Activated CD8-positive, alpha-beta T cell treated with anti-CD3 and anti-CD28 coated beads, Interleukin-2, amount 10 ng/mL, durations not matched to agents 7 days and 5 days (primary cell): ENCODE measurements at regions of chr17 and their contacts with region 1.

Region 1: GRCh38 chr17:35486920-35487732 is 38.6 kb upstream of the SLFN13 start:
- DNase-seq: peak; percentile 76
- ATAC-seq: peak; percentile 69
- H3K4me3 Mint-ChIP-seq: peak overlapping the region; percentile 76
- H3K27ac Mint-ChIP-seq: peak overlapping the region; percentile 90
- H3K4me1 Mint-ChIP-seq: peaks cover 71% of the 10 kb centered on the region
- H3K27me3 Mint-ChIP-seq: no peaks in the 10 kb centered on the region

Region 2: GRCh38 chr17:35352284-35352683 is 134.8 kb before region 1 on chr17:
- CTCF ChIA-PET with region 1: no interaction called
- POLR2A ChIA-PET with region 1: no interaction called
- DNase-seq: no peak
- ATAC-seq: no peak
- H3K4me3 Mint-ChIP-seq: no peak overlapping the region
- H3K27ac Mint-ChIP-seq: no peak overlapping the region
- H3K4me1 Mint-ChIP-seq: peaks cover 8% of the 10 kb centered on the region
- H3K27me3 Mint-ChIP-seq: no peaks in the 10 kb centered on the region

Region 3: DNA sequence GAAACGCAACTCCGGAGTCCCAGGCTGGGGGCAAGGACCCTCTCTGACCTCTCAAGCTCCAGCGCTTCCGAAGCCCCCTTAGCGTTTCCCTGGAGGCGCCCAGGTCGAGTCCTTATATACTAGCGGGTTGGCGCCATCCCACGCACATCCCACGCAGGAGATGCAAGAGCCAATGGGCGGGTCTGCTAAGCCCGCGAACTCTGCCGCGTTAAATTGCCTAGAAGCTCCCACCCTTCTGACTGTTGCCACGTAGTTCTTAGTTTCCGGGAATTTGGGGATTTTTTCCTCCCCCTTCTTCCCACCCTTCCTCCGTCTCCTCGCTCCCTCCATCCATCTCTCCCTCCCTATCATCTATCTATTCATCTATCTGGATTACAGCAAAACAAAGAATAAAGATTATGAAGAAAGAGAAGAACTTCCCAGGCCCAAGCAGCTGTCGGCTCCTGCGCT is 113.6 kb before region 1 on chr17 and contains the start of gene SLFN11:
- CTCF ChIA-PET with region 1: interaction called, 13 read pairs
- POLR2A ChIA-PET with region 1: interaction called, 4 read pairs
- DNase-seq: peak; percentile 86
- ATAC-seq: peak; percentile 81
- H3K4me3 Mint-ChIP-seq: peak within 1 kb of the TSS; percentile 99
- H3K27ac Mint-ChIP-seq: peak within 1 kb of the TSS; percentile 98
- H3K4me1 Mint-ChIP-seq: peaks cover 57% of the 10 kb centered on the region
- H3K27me3 Mint-ChIP-seq: peaks cover 3% of the 10 kb centered on the region
- total RNA-seq, gene SLFN11: 40.0 to 50.1 TPM

Region 4: DNA sequence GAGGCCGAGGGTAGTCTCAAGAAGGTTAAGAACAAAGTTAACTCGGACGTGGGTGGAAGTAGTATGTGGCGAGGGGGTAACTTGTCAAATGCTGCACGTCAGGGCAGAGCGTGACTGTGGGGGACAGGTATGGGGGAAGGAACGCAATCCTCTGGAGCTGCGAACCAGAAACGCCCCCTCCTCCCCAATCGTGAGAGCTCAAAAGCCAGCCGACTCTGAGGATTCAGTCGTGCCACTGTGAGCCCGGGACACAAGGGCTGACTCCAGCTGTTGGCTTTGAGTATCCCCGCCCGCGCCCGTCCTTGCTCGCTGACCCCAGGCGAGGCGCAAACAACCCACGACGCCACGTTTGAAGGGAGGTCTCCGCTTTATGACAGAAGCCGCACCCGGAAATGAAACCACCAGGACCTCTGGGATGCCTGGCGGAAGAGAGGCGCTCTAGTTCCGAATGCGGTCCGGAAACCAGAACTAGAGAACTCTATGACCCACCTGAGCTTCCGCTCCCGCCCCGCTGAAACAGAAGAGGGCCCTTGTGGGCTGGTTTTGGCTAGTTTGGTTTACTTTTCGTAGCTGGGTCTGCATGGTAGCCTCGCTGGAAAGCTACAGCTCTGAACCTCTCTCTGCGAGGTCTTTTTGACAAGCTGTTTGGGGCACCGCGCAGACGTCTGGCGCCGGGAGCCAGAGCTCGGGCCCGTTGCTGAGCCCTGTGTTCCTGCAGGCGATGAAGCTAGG is 91.2 kb after region 1 on chr17 and contains the start of gene PEX12:
- CTCF ChIA-PET with region 1: no interaction called
- POLR2A ChIA-PET with region 1: no interaction called
- DNase-seq: peak; percentile 94
- ATAC-seq: peak; percentile 96
- H3K4me3 Mint-ChIP-seq: peak within 1 kb of the TSS; percentile 93
- H3K27ac Mint-ChIP-seq: peak within 1 kb of the TSS; percentile 96
- H3K4me1 Mint-ChIP-seq: peaks cover 28% of the 10 kb centered on the region
- H3K27me3 Mint-ChIP-seq: peaks cover under 1% of the 10 kb centered on the region
- total RNA-seq, gene PEX12: 4.0 to 4.1 TPM